ENCODE measurements at regions of chr3 and their contacts with region 1.

Region 1: DNA sequence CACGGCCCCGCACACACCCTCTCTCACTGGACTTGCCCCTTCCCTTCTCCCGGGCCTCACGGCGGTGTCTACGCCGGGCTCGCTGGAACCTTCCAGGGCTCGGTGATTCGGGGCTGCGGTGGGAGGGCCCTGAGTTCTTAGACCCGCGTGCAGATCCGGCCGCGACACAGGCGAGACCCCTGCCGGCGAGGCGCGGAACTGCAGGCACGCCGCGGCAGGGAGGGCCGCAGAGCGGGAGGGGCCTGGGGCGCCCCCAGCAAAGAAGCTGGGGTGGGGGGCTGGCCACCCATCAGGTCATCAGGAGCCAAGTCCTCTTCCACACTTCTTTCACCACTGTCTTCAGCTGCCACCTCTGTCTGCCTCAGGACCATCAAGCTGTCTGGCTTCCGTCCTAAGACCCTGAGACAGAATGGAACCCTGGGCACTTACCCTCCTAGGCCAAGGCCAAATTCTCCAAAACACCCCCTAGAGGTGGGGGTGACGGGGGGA is 164.5 kb downstream of the XXYLT1 start:
- DNase-seq: peak; percentile 90

Region 2: DNA sequence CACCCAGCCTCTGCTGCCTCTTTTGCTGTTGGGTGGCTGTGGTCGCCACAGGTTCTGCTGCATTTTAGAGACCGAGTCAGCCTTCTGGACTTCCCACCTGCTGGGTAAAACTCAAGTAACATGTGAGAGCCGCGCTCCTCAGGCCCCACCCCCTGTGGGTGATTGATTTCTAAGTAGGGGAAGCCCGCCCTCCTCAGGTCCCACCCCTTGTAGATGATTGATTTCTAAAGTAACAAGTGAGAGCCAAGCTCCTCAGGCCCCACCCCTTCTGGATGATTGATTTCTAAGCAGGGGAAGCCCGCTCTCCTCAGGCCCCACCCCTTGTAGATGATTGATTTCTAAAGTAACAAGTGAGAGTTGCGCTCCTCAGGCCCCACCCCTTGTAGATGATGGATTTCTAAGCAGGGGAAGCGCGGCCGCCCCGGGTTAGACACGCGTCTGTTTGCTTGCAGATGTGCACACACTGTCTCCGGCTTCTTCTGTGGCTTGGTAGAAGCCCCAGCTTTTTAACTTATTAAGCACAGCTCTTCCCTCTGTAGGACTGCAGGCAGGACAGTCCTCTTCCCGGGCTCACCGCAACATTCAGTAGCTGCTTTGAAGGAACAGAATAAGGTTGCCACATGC is 337.3 kb before region 1 on chr3:
- intact Hi-C with region 1: loop called (anchors 10 kb)
- DNase-seq: peak; percentile 92

Region 3: GRCh38 chr3:194879991-194880939 is 226.2 kb before region 1 on chr3:
- intact Hi-C with region 1: loop called (anchors 5 kb)
- DNase-seq: peak; percentile 86

Region 4: DNA sequence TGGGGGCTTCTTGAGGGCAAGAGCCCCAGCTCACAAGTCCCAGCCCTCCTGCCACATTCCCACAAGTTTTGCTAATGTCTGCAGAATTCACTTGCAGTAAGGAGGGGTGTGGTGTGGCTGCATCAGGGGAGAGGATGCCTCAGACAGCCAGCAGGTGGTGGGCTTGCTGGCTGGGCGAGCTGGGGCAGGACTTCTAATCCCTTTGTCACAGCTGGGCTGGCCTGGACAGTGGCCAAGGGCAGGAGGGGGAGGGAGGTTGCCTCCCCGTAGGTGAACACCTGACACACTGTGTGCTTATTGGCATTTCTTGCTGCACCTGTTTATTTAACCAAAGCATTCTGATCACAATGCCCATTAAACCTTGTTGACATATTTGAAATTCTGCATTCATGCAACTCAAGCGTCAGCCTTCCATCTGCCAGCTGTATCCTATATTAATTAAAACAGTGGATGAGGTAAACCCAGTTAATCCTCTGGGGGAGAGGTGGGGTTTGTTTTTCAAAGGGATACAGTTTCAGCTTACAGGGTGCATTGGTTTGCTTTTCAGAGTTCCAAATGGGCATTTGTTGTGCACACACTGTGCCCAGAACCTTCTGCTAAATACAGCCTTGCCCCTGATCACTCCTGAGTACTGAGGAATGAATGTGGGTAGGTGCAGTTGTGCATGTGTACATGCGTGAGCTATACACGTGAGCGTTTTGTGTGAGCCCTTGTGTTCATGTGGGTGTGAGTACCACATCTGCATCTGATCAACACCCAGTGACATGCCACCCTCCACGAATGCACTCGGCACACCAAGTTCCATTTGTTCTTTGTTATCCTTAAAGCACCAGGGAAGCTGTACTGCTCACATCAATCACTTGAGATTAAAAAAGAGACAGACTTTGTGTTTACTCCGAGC is 104.3 kb before region 1 on chr3:
- intact Hi-C with region 1: loop called (anchors 2 kb)
- DNase-seq: peak; percentile 81

Region 5: GRCh38 chr3:195030791-195031321 is 75.6 kb before region 1 on chr3:
- intact Hi-C with region 1: loop called (anchors 1 kb)
- DNase-seq: peak; percentile 63

Region 6: GRCh38 chr3:195048059-195048905 is 58.2 kb before region 1 on chr3:
- intact Hi-C with region 1: no loop called
- DNase-seq: no peak

Region 7: GRCh38 chr3:195080571-195081151 is 25.8 kb before region 1 on chr3:
- intact Hi-C with region 1: loop called (anchors 2 kb)
- DNase-seq: peak; percentile 87

Region 8: GRCh38 chr3:195697582-195698301 is 591.3 kb after region 1 on chr3:
- intact Hi-C with region 1: no loop called
- DNase-seq: peak; percentile 69

Measured in cardiac septum (tissue), 1 donor.